CD14-positive monocyte (primary cell): ENCODE measurements at regions of chr11 and their contacts with region 1.

Region 1: DNA sequence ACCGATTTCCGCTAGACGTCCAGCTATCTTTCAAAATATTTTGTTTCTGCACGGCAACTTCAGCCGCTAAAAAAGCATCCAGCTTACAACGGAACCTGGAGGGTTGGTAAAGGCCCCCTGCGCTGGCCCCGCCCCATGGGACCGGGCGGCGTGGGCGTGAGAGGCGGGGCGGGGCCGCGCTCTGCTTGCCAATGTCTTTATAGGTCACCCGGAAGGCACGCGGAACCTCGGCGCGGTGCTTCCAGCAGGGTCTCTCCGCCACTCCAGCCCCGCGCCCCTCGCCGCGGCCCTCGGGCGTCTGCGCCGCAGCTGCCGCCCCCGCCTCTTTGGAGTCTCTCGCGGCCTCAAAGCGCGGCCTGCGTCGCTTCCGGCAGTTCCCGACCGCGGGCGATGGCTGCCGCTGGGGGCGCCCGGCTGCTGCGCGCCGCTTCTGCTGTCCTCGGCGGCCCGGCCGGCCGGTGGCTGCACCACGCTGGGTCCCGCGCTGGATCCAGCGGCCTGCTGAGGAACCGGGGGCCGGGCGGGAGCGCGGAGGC is at the start of gene FDX1:
- DNase-seq: peak; percentile 71 to 75 (median 73)
- H3K4me3 ChIP-seq: peak within 1 kb of the TSS; percentile 78 to 94 (median 92)
- H3K4me3 Mint-ChIP-seq: peak within 1 kb of the TSS; percentile 97 to 99
- H3K27ac ChIP-seq: peak within 1 kb of the TSS; percentile 75 to 93
- H3K27ac Mint-ChIP-seq: peak within 1 kb of the TSS; percentile 87 to 96 (median 96)
- H3K4me1 ChIP-seq: peaks cover 18 to 26% of the 10 kb centered on the region in 2 donors
- H3K4me1 Mint-ChIP-seq: peaks cover 25% of the 10 kb centered on the region
- H3K27me3 ChIP-seq: no peaks in the 10 kb centered on the region
- H3K27me3 Mint-ChIP-seq: peaks cover 0 to 2% (median 0%) of the 10 kb centered on the region in 3 donors
- CTCF ChIP-seq: peak; percentile 68
- polyA plus RNA-seq, gene FDX1: 3.9 to 20.2 (median 12.8) TPM

Region 2: DNA sequence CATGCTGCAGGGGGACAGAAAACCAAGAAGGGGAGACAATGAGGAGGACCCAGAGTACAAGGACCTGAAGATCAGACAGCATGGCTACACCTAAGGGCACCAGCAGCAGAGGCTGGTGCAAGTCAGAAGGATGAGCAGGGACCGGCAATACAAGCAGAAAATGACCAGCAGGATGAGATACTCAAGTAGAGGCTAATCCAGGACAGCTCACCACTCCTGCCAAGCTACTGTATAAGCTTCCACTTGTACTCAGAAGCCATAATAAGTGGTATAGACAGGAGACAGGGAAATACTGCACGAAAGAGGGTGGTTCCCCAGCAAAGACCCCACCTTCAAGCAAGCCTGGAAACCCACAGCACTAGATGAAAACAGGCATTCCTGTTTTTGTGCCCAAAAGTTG is 475.3 kb before region 1 on chr11:
- intact Hi-C with region 1: loop called in 1 of 2 experiments (anchors 5 kb)
- DNase-seq: no peak
- H3K4me3 ChIP-seq: no peak overlapping the region
- H3K4me3 Mint-ChIP-seq: no peak overlapping the region
- H3K27ac ChIP-seq: no peak overlapping the region
- H3K27ac Mint-ChIP-seq: no peak overlapping the region
- H3K4me1 ChIP-seq: no peaks in the 10 kb centered on the region
- H3K4me1 Mint-ChIP-seq: no peaks in the 10 kb centered on the region
- H3K27me3 ChIP-seq: no peaks in the 10 kb centered on the region
- H3K27me3 Mint-ChIP-seq: peaks cover 0 to 3% (median 0%) of the 10 kb centered on the region in 3 donors
- CTCF ChIP-seq: no peak

Region 3: DNA sequence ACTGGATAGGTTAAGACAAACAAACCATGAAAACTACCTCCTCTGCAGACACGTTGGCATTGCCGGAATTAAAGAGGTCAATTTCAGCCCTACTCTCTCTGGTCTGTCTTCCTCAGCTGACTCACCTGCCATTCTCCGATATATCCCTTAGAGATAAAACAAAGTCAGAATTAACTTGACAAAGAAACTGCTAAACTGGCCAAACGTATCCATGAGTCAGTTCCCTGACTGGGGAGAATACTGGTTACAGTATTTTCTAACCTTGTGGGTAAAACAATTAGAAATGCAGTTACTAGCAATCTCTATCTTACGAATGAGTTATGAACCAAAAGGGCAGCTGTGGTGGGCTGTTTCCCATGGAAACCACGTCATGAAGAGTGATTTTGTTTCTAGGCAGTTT is 229.6 kb before region 1 on chr11:
- intact Hi-C with region 1: loop called (anchors 2 to 5 kb)
- DNase-seq: no peak
- H3K4me3 ChIP-seq: no peak overlapping the region
- H3K4me3 Mint-ChIP-seq: no peak overlapping the region
- H3K27ac ChIP-seq: no peak overlapping the region
- H3K27ac Mint-ChIP-seq: no peak overlapping the region
- H3K4me1 ChIP-seq: no peaks in the 10 kb centered on the region
- H3K4me1 Mint-ChIP-seq: peaks cover 2% of the 10 kb centered on the region
- H3K27me3 ChIP-seq: no peaks in the 10 kb centered on the region
- H3K27me3 Mint-ChIP-seq: peaks cover 0 to 3% (median 0%) of the 10 kb centered on the region in 3 donors
- CTCF ChIP-seq: no peak

Region 4: GRCh38 chr11:110296226-110297075 is 133.3 kb before region 1 on chr11 and contains the start of gene RDX:
- intact Hi-C with region 1: loop called (anchors 5 kb)
- DNase-seq: peak; percentile 51 to 72 (median 69)
- H3K4me3 ChIP-seq: peak within 1 kb of the TSS; percentile 67 to 89 (median 82)
- H3K4me3 Mint-ChIP-seq: peak within 1 kb of the TSS; percentile 88 to 93
- H3K27ac ChIP-seq: peak within 1 kb of the TSS; percentile 70 to 85
- H3K27ac Mint-ChIP-seq: peak within 1 kb of the TSS; percentile 72 to 92 (median 86)
- H3K4me1 ChIP-seq: peaks cover 36 to 37% of the 10 kb centered on the region in 2 donors
- H3K4me1 Mint-ChIP-seq: peaks cover 33% of the 10 kb centered on the region
- H3K27me3 ChIP-seq: no peaks in the 10 kb centered on the region
- H3K27me3 Mint-ChIP-seq: peaks cover 0 to 5% (median 3%) of the 10 kb centered on the region in 3 donors
- CTCF ChIP-seq: no peak
- polyA plus RNA-seq, gene RDX: 11.9 to 22.0 (median 20.9) TPM

Region 5: DNA sequence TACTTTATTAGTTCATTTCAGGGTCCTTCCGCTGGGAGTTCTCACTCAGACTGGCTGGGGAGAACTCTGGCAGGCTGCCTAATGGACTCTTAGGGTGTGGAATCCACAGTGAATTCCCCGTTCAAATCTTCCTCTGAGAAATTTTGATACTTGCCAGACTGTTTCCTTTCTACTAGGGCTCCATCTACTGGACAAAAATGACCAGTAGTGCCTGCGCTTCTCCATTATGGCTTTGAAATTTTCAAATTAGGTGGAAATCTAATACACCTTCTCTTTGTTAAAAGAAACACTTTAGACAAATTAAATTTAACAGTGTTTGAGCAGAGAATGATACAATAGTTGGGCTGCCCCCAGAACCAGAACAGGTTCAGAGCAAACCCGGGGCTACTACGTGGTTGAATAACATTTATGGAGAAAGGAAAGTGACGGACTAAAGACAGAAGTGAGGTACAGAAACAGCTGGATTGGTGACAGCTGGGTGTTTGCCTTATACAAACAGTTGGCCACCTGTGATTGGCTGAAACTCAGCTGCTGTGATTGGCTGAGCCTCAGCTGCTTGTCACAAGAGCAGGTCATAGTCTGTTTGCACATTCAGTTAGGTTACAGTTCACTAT is 53.0 kb before region 1 on chr11:
- intact Hi-C with region 1: loop called (anchors 5 to 10 kb)
- DNase-seq: peak; percentile 65 to 86 (median 75)
- H3K4me3 ChIP-seq: peak overlapping the region; percentile 23 to 51 (median 38)
- H3K4me3 Mint-ChIP-seq: peak overlapping the region; percentile 59 to 80
- H3K27ac ChIP-seq: peak overlapping the region; percentile 47 to 69
- H3K27ac Mint-ChIP-seq: peak overlapping the region; percentile 76 to 92 (median 85)
- H3K4me1 ChIP-seq: peaks cover 35 to 47% of the 10 kb centered on the region in 2 donors
- H3K4me1 Mint-ChIP-seq: peaks cover 43% of the 10 kb centered on the region
- H3K27me3 ChIP-seq: no peaks in the 10 kb centered on the region
- H3K27me3 Mint-ChIP-seq: peaks cover 0 to 2% (median 0%) of the 10 kb centered on the region in 3 donors
- CTCF ChIP-seq: peak; percentile 85